Activated naive CD4-positive, alpha-beta T cell treated with anti-CD3 and anti-CD28 coated beads, Interleukin-2, amount 10 ng/mL, durations not matched to agents 7 days and 5 days (primary cell): ENCODE measurements at regions of chr1 and their contacts with region 1.

Region 1: GRCh38 chr1:223531742-223532341 is 133.7 kb downstream of the CAPN8 start:
- DNase-seq: peak; percentile 70
- H3K4me3 Mint-ChIP-seq: no peak overlapping the region
- H3K27ac Mint-ChIP-seq: no peak overlapping the region
- H3K4me1 Mint-ChIP-seq: peaks cover 5% of the 10 kb centered on the region
- H3K27me3 Mint-ChIP-seq: peaks cover 38% of the 10 kb centered on the region

Region 2: GRCh38 chr1:223515926-223516325 is 15.9 kb before region 1 on chr1:
- CTCF ChIA-PET with region 1: interaction called, 16 read pairs
- DNase-seq: peak; percentile 54
- H3K4me3 Mint-ChIP-seq: peak overlapping the region; percentile 35
- H3K27ac Mint-ChIP-seq: peak overlapping the region; percentile 95
- H3K4me1 Mint-ChIP-seq: peaks cover 49% of the 10 kb centered on the region
- H3K27me3 Mint-ChIP-seq: peaks cover 5% of the 10 kb centered on the region

Region 3: DNA sequence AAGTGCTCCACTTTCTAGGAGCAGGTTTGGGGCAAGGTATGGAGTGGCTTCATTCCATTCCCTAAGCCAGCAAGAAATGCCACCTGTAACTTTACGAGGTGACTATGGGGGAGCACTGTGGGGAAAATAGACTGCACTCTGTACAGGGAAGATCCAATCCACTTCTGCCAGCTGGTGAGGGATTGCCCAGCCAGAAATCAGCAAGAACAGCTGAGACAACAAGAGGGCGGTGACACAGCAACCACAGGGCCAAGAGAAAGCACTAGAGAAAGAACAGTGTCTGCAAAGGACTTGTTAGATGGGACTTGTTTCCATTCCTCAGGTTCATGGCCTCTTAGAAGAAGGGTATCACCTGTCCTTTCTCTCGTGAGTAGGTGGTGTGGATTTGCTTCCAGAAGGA is 114.1 kb after region 1 on chr1:
- CTCF ChIA-PET with region 1: no interaction called
- DNase-seq: no peak
- H3K4me3 Mint-ChIP-seq: no peak overlapping the region
- H3K27ac Mint-ChIP-seq: no peak overlapping the region
- H3K4me1 Mint-ChIP-seq: no peaks in the 10 kb centered on the region
- H3K27me3 Mint-ChIP-seq: peaks cover 18% of the 10 kb centered on the region